ENCODE measurements at regions of chr3 and their contacts with region 1.

Region 1: DNA sequence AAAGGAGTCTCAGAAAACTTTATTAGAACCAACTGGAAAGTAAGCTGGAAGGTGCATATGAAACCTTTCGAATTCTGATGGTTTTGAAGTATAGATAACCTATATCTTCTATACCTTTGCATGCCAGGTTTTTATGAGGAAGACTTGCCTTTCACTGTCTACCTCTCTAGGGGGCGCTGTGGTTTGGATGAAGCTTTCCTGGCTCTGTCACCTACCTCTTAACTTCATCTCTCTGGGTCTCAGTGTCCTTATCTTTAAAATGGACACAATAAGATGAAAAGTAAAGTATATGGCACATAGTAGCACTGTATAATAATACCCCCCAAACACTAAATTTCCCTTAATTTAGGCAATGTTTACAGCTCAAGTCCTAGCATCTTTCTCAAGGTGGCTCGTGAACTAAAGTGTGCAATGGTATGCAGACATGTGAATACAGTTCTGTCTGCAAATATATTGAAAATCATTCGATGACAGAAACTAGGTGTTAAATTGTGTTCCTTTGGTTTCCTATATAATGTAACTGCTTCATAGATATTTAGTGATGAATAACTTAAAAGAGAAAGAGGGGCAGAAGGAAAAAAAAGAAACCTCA is 314.3 kb downstream of the CHST2 start:
- DNase-seq: peak; percentile 44
- ATAC-seq: peak; percentile 55
- H3K4me3 Mint-ChIP-seq: no peak overlapping the region
- H3K27ac Mint-ChIP-seq: no peak overlapping the region
- H3K4me1 Mint-ChIP-seq: peaks cover 26% of the 10 kb centered on the region
- H3K27me3 Mint-ChIP-seq: peaks cover 4% of the 10 kb centered on the region
- CTCF ChIP-seq: peak; percentile 62

Region 2: GRCh38 chr3:143644370-143645089 is 210.6 kb after region 1 on chr3:
- CTCF ChIA-PET with region 1: interaction called, 14 read pairs
- POLR2A ChIA-PET with region 1: no interaction called
- DNase-seq: peak; percentile 55
- ATAC-seq: peak; percentile 94
- H3K4me3 Mint-ChIP-seq: no peak overlapping the region
- H3K27ac Mint-ChIP-seq: no peak overlapping the region
- H3K4me1 Mint-ChIP-seq: peaks cover 12% of the 10 kb centered on the region
- H3K27me3 Mint-ChIP-seq: no peaks in the 10 kb centered on the region
- CTCF ChIP-seq: peak; percentile 60